Caki2 (cell line): ENCODE measurements at regions of chr19 and their contacts with region 1.

Region 1: GRCh38 chr19:38264486-38265212 is at the start of gene SPINT2:
- DNase-seq: no peak
- total RNA-seq, gene SPINT2: 1,423 and 1,713 TPM in 2 replicates

Region 2: GRCh38 chr19:38315657-38316476 is 51.2 kb after region 1 on chr19 and contains the start of gene YIF1B:
- in situ Hi-C with region 1: loop called (anchors 5 kb)
- DNase-seq: peak; percentile 97
- total RNA-seq, gene YIF1B: 180 and 207 TPM in 2 replicates